CD8-positive, alpha-beta T cell (primary cell): ENCODE measurements at regions of chr3 and their contacts with region 1.

Region 1: GRCh38 chr3:30475038-30475808 is 131.2 kb upstream of the TGFBR2 start:
- DNase-seq: peak in 5 of 9 experiments; percentile 20 to 63 (median 37)
- ATAC-seq: peak; percentile 85
- H3K4me3 ChIP-seq: no peak overlapping the region
- H3K4me3 Mint-ChIP-seq: no peak overlapping the region
- H3K27ac ChIP-seq: no peak overlapping the region
- H3K27ac Mint-ChIP-seq: peak overlapping the region; percentile 50
- H3K4me1 ChIP-seq: peaks cover 20% of the 10 kb centered on the region
- H3K4me1 Mint-ChIP-seq: peaks cover 42% of the 10 kb centered on the region
- H3K27me3 ChIP-seq: no peaks in the 10 kb centered on the region
- H3K27me3 Mint-ChIP-seq: no peaks in the 10 kb centered on the region
- CTCF ChIP-seq: no peak

Region 2: DNA sequence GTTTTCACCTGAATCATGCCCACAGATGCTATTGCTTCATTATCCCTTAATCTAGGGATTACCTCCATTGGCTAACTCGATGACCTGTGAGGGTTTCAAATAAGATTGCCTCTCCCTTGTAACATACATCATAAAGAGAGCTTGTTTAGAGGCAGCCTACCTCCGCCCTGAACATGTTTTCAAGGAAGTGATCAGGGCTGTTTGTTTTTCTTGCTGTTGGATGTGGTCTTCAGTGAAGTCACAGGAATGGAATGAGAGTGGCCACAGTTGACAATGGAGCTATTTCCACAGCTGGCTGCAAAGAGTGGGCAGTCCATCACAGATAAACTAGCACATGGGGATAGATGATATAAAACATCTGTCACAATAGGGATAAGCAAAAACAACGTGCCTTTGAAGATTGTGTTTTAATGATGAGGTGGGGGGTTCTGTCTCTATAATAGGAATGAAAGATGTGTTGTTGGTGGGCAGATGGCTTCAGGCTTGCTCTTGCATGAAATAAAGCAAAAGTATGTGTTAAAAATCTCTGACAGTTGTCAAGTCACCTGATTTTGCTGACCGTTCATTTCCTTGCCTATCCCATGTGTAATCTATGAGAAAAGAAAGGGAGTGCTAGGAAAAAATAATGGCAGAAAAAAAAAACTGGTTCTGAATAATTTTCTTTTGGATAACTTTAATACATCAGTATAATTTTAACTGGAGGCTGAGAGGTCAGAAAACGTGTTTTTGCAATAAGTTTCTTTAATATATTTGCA is 552.1 kb before region 1 on chr3:
- CTCF ChIA-PET with region 1: no interaction called
- POLR2A ChIA-PET with region 1: no interaction called
- intact Hi-C with region 1: no loop called
- DNase-seq: no peak
- ATAC-seq: no peak
- H3K4me3 ChIP-seq: no peak overlapping the region
- H3K4me3 Mint-ChIP-seq: no peak overlapping the region
- H3K27ac ChIP-seq: no peak overlapping the region
- H3K27ac Mint-ChIP-seq: no peak overlapping the region
- H3K4me1 ChIP-seq: no peaks in the 10 kb centered on the region
- H3K4me1 Mint-ChIP-seq: no peaks in the 10 kb centered on the region
- H3K27me3 ChIP-seq: no peaks in the 10 kb centered on the region
- H3K27me3 Mint-ChIP-seq: peaks cover 5% of the 10 kb centered on the region
- CTCF ChIP-seq: no peak

Region 3: DNA sequence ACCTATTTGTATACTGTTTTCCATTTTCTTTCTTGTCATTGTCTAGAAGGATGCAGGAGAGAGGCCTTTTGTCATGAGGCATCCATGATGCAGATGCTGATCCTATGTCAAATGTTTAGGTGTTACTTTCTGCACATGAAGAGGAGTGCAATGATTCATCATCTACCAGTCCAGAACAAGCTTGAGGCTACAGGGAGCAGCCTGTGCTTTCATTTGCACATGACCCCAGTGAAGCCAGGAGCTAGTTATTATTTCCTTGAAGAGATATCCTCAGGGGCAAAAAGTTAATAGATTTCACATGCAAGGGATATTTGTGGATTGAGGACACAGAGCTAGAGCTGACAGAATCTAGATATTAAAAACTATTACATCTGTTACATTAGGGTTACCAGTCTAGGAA is 73.3 kb before region 1 on chr3:
- CTCF ChIA-PET with region 1: no interaction called
- POLR2A ChIA-PET with region 1: no interaction called
- intact Hi-C with region 1: no loop called
- DNase-seq: no peak
- ATAC-seq: no peak
- H3K4me3 ChIP-seq: no peak overlapping the region
- H3K4me3 Mint-ChIP-seq: no peak overlapping the region
- H3K27ac ChIP-seq: no peak overlapping the region
- H3K27ac Mint-ChIP-seq: no peak overlapping the region
- H3K4me1 ChIP-seq: no peaks in the 10 kb centered on the region
- H3K4me1 Mint-ChIP-seq: peaks cover 22% of the 10 kb centered on the region
- H3K27me3 ChIP-seq: no peaks in the 10 kb centered on the region
- H3K27me3 Mint-ChIP-seq: no peaks in the 10 kb centered on the region
- CTCF ChIP-seq: no peak

Region 4: GRCh38 chr3:30437171-30437601 is 38.0 kb before region 1 on chr3:
- CTCF ChIA-PET with region 1: no interaction called
- POLR2A ChIA-PET with region 1: no interaction called
- intact Hi-C with region 1: loop called in 1 of 2 experiments (anchors 5 kb)
- DNase-seq: no peak
- ATAC-seq: no peak
- H3K4me3 ChIP-seq: no peak overlapping the region
- H3K4me3 Mint-ChIP-seq: no peak overlapping the region
- H3K27ac ChIP-seq: no peak overlapping the region
- H3K27ac Mint-ChIP-seq: no peak overlapping the region
- H3K4me1 ChIP-seq: peaks cover 22% of the 10 kb centered on the region
- H3K4me1 Mint-ChIP-seq: peaks cover 31% of the 10 kb centered on the region
- H3K27me3 ChIP-seq: no peaks in the 10 kb centered on the region
- H3K27me3 Mint-ChIP-seq: no peaks in the 10 kb centered on the region
- CTCF ChIP-seq: no peak

Region 5: GRCh38 chr3:30524357-30525040 is 49.3 kb after region 1 on chr3:
- CTCF ChIA-PET with region 1: no interaction called
- POLR2A ChIA-PET with region 1: no interaction called
- intact Hi-C with region 1: loop called in 1 of 2 experiments (anchors 5 kb)
- DNase-seq: peak in 1 of 9 experiments; percentile 4
- ATAC-seq: no peak
- H3K4me3 ChIP-seq: no peak overlapping the region
- H3K4me3 Mint-ChIP-seq: no peak overlapping the region
- H3K27ac ChIP-seq: no peak overlapping the region
- H3K27ac Mint-ChIP-seq: no peak overlapping the region
- H3K4me1 ChIP-seq: peaks cover 7% of the 10 kb centered on the region
- H3K4me1 Mint-ChIP-seq: peaks cover 11% of the 10 kb centered on the region
- H3K27me3 ChIP-seq: no peaks in the 10 kb centered on the region
- H3K27me3 Mint-ChIP-seq: no peaks in the 10 kb centered on the region
- CTCF ChIP-seq: no peak

Region 6: DNA sequence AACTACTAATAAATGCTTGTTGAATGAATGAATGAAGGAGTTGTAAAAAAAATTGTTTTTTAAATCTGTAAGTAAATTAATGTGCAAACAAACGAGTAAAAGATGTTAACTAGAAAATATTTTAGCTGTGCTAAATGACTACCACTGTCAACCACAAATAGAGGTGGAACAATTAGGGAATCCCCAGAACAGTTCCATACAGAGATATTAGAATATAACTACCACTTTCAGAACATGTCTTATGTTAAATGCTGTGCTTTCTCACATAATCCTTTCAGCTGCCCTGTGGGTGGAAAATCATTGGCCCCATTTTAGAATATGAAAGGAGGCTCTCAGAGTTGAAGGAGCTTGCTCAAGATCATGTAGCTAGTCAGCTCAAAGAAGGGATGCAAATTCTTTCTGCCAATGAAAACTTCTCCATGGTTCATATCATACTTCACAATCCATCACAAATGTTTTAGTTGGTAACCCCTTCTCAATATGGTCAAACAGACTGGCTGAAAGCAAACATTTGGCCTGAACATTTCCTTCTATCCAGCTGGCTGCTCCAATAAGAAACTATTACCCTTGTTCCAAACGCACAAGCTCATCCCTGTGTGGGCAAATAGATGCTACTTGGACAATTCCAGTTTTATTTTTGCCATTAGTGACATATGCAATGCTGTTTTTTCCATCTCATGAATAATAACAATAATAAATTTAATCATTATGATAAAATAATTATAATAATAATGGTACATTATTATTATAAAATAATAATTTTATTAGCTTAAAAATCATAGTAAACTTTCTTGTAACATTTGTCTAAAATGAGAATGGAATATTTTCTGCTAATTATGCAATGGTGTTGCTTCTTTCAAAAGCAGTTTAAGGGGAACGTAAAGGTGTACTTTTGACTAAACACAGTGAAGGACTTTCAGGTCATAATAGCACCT is 767.1 kb after region 1 on chr3:
- CTCF ChIA-PET with region 1: no interaction called
- POLR2A ChIA-PET with region 1: no interaction called
- intact Hi-C with region 1: no loop called
- DNase-seq: no peak
- ATAC-seq: no peak
- H3K4me3 ChIP-seq: no peak overlapping the region
- H3K4me3 Mint-ChIP-seq: no peak overlapping the region
- H3K27ac ChIP-seq: no peak overlapping the region
- H3K27ac Mint-ChIP-seq: no peak overlapping the region
- H3K4me1 ChIP-seq: no peaks in the 10 kb centered on the region
- H3K4me1 Mint-ChIP-seq: no peaks in the 10 kb centered on the region
- H3K27me3 ChIP-seq: no peaks in the 10 kb centered on the region
- H3K27me3 Mint-ChIP-seq: no peaks in the 10 kb centered on the region
- CTCF ChIP-seq: no peak

Region 7: GRCh38 chr3:31573036-31573779 is 1098.0 kb after region 1 on chr3:
- CTCF ChIA-PET with region 1: no interaction called
- POLR2A ChIA-PET with region 1: no interaction called
- intact Hi-C with region 1: no loop called
- DNase-seq: no peak
- ATAC-seq: no peak
- H3K4me3 ChIP-seq: no peak overlapping the region
- H3K4me3 Mint-ChIP-seq: no peak overlapping the region
- H3K27ac ChIP-seq: no peak overlapping the region
- H3K27ac Mint-ChIP-seq: no peak overlapping the region
- H3K4me1 ChIP-seq: peaks cover 72% of the 10 kb centered on the region
- H3K4me1 Mint-ChIP-seq: peaks cover 73% of the 10 kb centered on the region
- H3K27me3 ChIP-seq: no peaks in the 10 kb centered on the region
- H3K27me3 Mint-ChIP-seq: no peaks in the 10 kb centered on the region
- CTCF ChIP-seq: no peak